ENCODE measurements at regions of chr15 and their contacts with region 1.

Region 1: DNA sequence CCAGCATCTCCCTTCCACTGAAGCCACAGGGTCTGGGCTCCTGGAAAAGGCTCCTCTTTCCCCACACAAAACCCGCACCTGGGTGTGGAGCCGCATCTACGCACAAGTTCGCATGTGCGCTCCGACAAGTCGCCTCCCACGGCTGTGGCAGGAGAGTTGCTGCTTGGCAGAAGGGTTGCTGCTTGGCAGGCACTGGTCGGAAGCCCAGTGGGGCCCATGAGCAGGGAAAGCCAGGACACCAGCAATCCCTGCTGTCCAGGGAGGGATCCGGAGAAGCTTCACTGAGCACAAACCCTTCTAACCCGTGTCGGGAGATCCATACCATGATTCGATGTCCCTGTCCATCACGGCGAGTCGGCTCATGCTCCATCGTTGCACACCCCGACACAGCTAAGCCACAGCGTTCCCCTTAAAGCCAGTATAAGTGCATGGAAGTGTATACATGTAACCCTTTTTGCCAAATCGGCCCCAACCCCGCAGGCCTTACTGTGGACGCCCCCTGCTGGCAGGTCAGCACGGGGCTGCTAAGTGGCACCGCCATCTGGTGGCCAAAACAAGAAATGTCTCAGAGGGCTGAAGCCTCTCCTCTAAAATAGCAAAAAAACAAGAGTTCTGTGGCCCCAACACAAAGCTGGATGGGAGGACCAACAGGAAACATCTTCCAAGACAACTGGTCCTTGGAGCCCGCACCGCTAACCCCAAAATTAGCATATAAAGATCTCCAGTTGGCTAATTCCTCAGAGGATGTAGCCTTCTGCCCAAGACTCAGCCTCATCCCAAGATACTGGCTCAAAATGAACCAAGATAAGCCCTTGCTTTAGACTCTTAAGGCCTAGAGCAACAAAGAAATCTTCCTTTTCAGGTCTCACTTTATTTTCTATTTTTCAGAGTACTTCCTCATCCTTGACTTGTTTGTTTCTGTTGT is 8.3 kb downstream of the ANKRD63 start:
- DNase-seq: peak; percentile 76
- H3K4me3 ChIP-seq: no peak overlapping the region
- H3K27ac ChIP-seq: no peak overlapping the region
- H3K4me1 ChIP-seq: no peaks in the 10 kb centered on the region
- H3K27me3 ChIP-seq: no peaks in the 10 kb centered on the region
- CTCF ChIP-seq: peak; percentile 100
- POLR2A ChIP-seq: no peak

Region 2: DNA sequence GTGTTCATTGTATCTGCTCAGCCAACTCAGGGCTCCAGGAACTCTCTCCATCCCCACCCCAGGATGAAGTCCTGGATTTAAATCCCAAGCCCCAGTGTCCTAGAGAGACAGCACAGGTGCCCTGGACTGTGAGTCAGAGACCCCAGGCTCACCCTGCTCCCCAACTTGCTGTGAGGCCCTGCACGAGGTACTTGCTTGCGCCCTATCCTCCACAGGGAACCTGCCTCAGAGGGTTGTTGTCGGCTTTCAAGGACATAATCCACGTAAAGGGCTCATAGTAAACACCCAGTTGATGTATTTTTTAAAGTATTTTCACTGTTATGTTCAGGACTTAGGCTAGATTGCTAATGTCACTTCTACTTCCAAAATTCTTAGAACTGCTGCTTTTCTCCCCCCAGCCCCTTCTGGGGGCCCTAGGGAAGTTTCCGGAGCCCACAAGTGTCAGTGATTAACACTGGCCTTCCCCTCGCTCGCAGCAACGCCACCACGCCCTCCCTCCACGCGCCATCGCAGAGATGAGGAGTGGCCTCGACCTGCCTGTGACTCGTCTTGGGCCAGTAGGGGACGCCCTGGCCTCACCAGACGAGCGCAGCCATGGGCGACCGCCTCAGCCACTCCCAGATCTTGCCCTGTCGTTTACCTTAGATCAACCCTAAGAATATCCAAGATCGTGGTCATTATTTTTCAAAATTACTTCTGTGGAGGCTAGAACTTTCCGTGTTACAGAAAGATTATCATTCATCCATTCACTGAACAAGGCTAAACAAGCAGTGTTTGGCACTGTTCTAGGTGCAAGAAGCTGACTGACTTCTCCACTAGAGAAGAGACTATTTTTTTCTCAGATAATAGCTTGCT is 229.7 kb before region 1 on chr15:
- intact Hi-C with region 1: loop called (anchors 2 kb)
- DNase-seq: peak; percentile 83
- H3K4me3 ChIP-seq: no peak overlapping the region
- H3K27ac ChIP-seq: peak overlapping the region; percentile 55 to 62
- H3K4me1 ChIP-seq: peaks cover 6% of the 10 kb centered on the region
- H3K27me3 ChIP-seq: no peaks in the 10 kb centered on the region
- CTCF ChIP-seq: peak; percentile 70 to 96 (median 91)
- POLR2A ChIP-seq: no peak

Region 3: GRCh38 chr15:40108855-40109735 is 165.5 kb before region 1 on chr15 and contains the start of gene BMF:
- intact Hi-C with region 1: loop called (anchors 5 kb)
- DNase-seq: peak; percentile 100
- H3K4me3 ChIP-seq: peak within 1 kb of the TSS; percentile 93 to 96
- H3K27ac ChIP-seq: peak within 1 kb of the TSS; percentile 85 to 93
- H3K4me1 ChIP-seq: peaks cover 35% of the 10 kb centered on the region
- H3K27me3 ChIP-seq: no peaks in the 10 kb centered on the region
- CTCF ChIP-seq: peak in 2 of 4 experiments; percentile 49 to 52
- POLR2A ChIP-seq: peak; percentile 95
- total RNA-seq, gene BMF: 8.8 to 19.0 TPM

Region 4: GRCh38 chr15:40217159-40217824 is 57.3 kb before region 1 on chr15:
- intact Hi-C with region 1: loop called (anchors 2 kb)
- DNase-seq: peak; percentile 81
- H3K4me3 ChIP-seq: no peak overlapping the region
- H3K27ac ChIP-seq: peak overlapping the region; percentile 19 to 40
- H3K4me1 ChIP-seq: no peaks in the 10 kb centered on the region
- H3K27me3 ChIP-seq: no peaks in the 10 kb centered on the region
- CTCF ChIP-seq: peak; percentile 74 to 96 (median 92)
- POLR2A ChIP-seq: no peak

Region 5: GRCh38 chr15:40338041-40338657 is 63.5 kb after region 1 on chr15:
- intact Hi-C with region 1: loop called (anchors 5 kb)
- DNase-seq: no peak
- H3K4me3 ChIP-seq: no peak overlapping the region
- H3K27ac ChIP-seq: peak overlapping the region in 1 of 2 donors; percentile 24
- H3K4me1 ChIP-seq: peaks cover 20% of the 10 kb centered on the region
- H3K27me3 ChIP-seq: no peaks in the 10 kb centered on the region
- CTCF ChIP-seq: peak in 3 of 4 experiments; percentile 45 to 60 (median 56)
- POLR2A ChIP-seq: no peak

Region 6: DNA sequence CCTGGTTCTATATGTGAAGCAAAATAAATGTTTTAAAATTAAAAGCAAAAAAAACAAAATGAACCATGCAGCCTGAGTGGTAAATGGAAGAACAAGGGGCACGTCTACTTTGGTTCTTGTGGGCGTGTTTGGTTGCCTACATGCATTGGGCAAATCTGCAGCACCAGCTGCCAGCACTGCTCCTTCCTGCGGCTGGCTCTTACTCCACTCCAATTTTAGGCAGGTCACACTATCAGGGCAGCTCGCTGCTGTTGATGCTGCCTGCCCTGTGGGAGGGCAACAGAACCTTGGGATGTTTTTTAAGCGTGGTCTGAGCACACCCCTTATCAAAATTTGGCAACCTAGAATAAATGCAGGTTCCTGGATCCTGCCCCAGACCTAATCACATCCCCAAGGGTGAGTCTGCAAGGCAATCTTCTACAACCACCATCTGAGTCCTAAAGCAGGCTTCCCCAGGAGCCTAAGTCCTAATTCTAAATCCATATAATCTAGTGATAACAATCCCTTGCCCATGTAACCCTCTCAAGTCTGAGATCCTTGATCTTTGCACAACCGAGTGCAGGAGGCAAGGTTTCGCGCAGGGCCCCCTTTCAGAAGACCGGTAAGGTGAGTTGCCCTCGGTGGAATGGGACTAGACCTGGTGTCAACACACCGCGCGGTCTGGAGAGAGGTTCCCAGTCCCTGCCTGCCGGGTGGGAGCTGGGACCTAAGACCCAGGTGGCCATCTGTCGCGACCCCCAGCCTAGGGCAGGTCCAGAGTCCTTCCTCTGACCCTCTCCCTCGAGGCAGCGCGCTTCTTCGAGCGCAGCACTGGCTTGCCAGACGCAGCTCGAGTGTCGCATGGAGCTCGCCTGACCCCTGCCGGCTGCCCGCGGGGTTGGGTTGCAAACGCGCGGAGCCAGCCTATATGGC is 146.9 kb after region 1 on chr15:
- intact Hi-C with region 1: loop called (anchors 1 kb)
- DNase-seq: peak; percentile 70
- H3K4me3 ChIP-seq: no peak overlapping the region
- H3K27ac ChIP-seq: peak overlapping the region; percentile 73 to 77
- H3K4me1 ChIP-seq: peaks cover 15% of the 10 kb centered on the region
- H3K27me3 ChIP-seq: no peaks in the 10 kb centered on the region
- CTCF ChIP-seq: peak; percentile 89 to 96 (median 92)
- POLR2A ChIP-seq: no peak